ENCODE measurements at regions of chr14 and their contacts with region 1.

Region 1: DNA sequence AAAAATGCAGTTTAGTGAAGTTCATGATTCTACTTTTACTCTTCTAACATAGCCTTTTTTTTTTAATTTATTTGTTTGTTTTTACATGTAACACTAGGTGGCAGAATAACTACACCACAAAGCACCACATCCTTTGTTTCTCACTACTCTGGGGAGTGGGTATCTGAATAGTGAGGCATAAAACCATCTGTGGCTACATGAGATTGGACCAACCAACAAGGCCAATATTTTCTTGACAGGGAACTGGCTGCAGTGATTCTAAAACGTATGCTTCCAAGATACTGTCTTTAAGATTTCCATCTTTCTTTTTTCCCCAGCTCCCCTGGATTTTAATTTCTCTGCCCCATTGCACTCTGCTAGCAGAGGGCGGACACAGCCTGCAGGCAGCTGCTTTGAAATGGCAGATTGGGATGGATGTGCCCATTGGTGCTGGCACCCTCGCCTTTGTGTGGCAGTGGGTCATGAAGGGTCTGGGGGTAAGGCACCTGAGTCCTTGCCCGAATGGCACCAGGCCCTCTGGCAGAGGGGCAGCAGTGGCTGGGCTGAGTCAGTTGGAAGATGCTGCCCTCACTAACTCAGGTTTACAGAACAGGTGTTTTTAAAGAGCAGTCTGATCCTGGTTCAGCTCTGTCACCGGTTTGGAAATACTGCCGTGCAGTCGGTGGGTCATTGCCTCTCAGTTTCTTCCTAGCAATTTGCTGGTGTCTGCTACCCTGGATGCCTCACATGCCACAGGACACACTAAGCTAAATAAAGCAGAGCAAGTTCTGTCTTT is 429.1 kb downstream of the RAD51B start:
- DNase-seq: no peak
- H3K4me3 Mint-ChIP-seq: no peak overlapping the region
- H3K27ac Mint-ChIP-seq: no peak overlapping the region
- H3K4me1 Mint-ChIP-seq: peaks cover 25% of the 10 kb centered on the region
- H3K27me3 Mint-ChIP-seq: no peaks in the 10 kb centered on the region

Region 2: GRCh38 chr14:68816262-68816942 is 567.7 kb after region 1 on chr14:
- intact Hi-C with region 1: loop called (anchors 1 kb)
- DNase-seq: peak; percentile 83
- H3K4me3 Mint-ChIP-seq: peak overlapping the region; percentile 79
- H3K27ac Mint-ChIP-seq: peak overlapping the region; percentile 92
- H3K4me1 Mint-ChIP-seq: peaks cover 51% of the 10 kb centered on the region
- H3K27me3 Mint-ChIP-seq: no peaks in the 10 kb centered on the region